ENCODE measurements at regions of chr2 and their contacts with region 1.

Region 1: DNA sequence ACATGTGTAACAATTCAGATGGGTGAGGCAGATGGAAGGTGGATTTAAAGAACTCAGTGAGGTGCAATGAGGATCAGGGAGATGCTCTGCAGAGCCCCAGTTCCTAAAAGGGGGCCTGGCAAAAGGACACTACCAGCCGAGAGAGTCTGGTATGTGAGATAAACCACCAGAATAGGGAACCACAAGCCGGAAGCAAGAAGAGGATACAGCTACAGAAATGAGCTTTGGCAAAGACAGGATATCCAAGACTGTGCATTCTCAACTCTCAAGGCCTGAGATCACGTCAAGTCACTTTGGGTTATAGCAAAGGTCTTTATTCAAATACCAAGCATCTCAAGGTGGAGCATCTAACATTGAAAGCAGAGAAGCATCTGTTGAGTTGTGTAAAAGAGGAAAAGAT is 293.5 kb downstream of the ARHGAP15 start:
- DNase-seq: peak; percentile 15
- H3K4me3 Mint-ChIP-seq: no peak overlapping the region
- H3K27ac Mint-ChIP-seq: no peak overlapping the region
- H3K4me1 Mint-ChIP-seq: peaks cover 64% of the 10 kb centered on the region
- H3K27me3 Mint-ChIP-seq: no peaks in the 10 kb centered on the region

Region 2: GRCh38 chr2:143397884-143398614 is 24.6 kb before region 1 on chr2:
- CTCF ChIA-PET with region 1: no interaction called
- POLR2A ChIA-PET with region 1: no interaction called
- intact Hi-C with region 1: loop called (anchors 2 kb)
- DNase-seq: no peak
- H3K4me3 Mint-ChIP-seq: peak overlapping the region; percentile 24
- H3K27ac Mint-ChIP-seq: peak overlapping the region; percentile 43
- H3K4me1 Mint-ChIP-seq: peaks cover 66% of the 10 kb centered on the region
- H3K27me3 Mint-ChIP-seq: no peaks in the 10 kb centered on the region

Region 3: DNA sequence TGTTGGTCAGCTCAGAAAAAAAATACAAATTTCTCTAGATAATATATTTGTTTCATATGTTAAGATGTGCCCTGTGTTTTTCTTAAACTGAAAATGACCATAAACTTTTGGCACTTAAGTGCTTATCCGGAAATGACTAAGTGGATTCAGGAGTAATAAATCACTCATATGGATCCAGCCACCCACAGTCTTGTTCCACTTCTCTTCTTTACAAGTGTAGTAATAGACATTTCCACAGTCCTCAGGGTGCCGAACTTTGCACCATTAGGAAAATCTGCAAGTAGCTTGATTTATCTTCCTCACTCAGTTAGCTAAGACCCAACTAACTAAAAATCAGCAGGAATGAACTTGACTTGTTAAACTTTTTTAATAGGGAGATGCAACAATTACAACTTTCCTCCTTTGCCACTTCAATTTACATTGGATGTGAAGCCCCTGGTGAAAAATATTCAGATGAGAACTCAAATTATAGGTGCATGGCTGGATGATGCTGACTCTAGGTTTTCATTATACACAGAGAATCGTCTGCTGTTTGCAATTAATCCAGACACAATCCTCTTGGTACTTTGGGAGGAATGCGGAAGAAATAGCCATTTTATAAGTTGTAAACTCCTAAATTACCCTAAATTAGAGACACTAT is 29.1 kb after region 1 on chr2:
- CTCF ChIA-PET with region 1: no interaction called
- POLR2A ChIA-PET with region 1: no interaction called
- intact Hi-C with region 1: no loop called
- DNase-seq: peak; percentile 18
- H3K4me3 Mint-ChIP-seq: peak overlapping the region; percentile 1
- H3K27ac Mint-ChIP-seq: peak overlapping the region; percentile 18
- H3K4me1 Mint-ChIP-seq: peaks cover 52% of the 10 kb centered on the region
- H3K27me3 Mint-ChIP-seq: no peaks in the 10 kb centered on the region